ENCODE measurements at regions of chr10 and their contacts with region 1.

Region 1: DNA sequence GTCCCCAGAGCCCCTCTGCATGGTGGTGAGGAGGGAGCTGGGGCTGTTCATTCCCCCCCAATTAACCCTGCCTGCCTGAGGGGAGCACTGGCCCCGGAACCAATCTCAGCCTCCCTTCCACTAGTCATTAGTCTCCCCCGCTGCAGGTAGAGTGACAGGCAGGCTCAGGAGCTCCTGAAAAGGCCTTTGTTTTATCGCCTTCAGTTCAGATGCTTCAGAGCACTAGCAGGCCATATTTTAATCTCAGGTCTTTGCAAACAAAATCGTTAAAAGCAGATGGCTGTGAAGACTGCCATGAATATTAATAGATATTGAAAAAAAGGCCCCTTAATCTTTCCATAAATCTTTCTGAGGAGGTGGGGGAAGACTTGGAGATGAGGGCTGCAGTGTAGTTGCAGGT is 250.7 kb downstream of the RPS24 start:
- DNase-seq: no peak
- H3K4me3 ChIP-seq: no peak overlapping the region
- H3K27ac ChIP-seq: no peak overlapping the region
- H3K4me1 ChIP-seq: no peaks in the 10 kb centered on the region
- H3K27me3 ChIP-seq: no peaks in the 10 kb centered on the region
- CTCF ChIP-seq: no peak
- POLR2A ChIP-seq: no peak

Region 2: DNA sequence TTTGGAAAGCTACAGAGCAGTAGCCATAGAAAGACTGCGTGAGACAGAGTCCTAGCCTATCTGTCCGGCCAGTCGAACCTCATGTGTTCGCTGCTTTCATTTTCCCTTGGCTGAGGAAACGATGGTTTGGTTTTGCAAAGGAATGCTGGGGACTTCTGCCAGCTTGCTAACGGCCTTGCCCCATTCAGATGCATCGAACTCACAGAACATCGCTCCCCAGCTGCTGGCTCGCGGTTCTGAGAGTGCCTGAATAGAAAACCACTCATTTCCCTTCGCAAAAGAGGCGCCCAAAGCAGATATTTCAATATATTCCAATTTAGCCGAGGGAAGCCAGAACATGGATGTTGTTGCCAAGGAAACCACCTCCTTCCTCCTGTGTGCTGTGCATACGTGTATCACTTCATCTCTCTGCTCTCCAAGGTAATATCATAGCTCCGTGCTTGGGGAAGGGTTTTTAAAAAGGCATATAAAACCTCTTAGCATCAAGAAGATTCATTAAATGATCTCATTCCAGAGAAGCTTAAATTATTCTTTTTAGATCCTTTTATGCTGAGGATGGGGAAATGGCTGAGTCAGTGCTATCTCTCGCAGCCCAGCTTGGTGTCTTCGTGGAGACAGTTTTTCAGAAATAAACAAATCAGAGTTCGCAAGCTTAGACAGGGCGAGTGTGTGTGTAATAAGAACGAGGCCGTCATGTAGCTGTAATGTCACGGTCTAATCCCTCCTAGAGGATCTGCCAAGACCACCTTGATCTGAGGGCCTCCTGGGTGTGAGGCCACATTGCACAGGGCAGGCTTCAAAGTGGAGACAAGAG is 35.5 kb before region 1 on chr10:
- intact Hi-C with region 1: loop called (anchors 2 kb)
- DNase-seq: no peak
- H3K4me3 ChIP-seq: no peak overlapping the region
- H3K27ac ChIP-seq: no peak overlapping the region
- H3K4me1 ChIP-seq: no peaks in the 10 kb centered on the region
- H3K27me3 ChIP-seq: no peaks in the 10 kb centered on the region
- CTCF ChIP-seq: no peak
- POLR2A ChIP-seq: no peak